Activated naive CD4-positive, alpha-beta T cell treated with anti-CD3 and anti-CD28 coated beads for 36 hours (primary cell): ENCODE measurements at regions of chr6 and their contacts with region 1.

Region 1: DNA sequence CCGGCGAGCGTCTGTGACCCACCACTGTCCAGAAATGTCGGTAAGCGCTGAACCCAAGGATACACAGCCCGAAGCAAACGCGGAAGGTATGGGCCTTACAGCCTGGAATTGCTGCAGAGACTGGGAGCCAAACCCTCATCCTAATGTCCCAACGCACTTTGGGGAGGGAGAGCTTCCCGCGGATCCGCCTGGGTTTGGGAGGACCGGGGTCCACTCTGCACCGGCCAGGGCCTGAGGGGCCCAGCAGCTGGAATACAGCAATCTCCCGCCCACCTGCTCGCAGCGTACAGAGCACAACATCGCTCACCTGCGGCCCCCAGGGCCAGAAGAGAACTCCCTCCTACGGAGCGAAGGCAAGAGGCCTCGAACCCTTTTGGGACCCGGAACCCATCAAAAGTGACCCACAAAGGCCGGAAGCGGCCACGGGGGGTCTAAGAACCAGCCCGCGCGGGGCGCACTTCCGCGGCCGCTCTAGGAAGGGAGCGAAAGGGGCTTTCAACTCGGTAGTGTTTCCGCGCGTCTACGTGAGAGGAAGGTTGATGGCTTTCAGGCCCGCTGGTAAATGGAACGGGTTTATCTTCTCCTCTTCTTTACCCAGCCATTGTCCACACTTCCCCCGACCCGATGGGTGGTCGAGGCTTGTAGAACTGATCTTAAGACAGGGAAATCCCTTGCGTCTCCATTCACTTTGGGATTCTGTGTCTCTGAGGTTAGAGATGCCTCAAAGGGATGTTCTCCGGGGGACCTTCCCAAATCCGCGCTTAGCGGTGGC is at the start of gene ZSCAN12:
- DNase-seq: peak; percentile 90
- H3K4me3 Mint-ChIP-seq: peak within 1 kb of the TSS; percentile 91
- H3K27ac Mint-ChIP-seq: peak within 1 kb of the TSS; percentile 91
- H3K4me1 Mint-ChIP-seq: peaks cover 39% of the 10 kb centered on the region
- H3K27me3 Mint-ChIP-seq: peaks cover 20% of the 10 kb centered on the region
- total RNA-seq, gene ZSCAN12: 4.4 to 4.7 TPM

Region 2: GRCh38 chr6:28281288-28282064 is 118.1 kb before region 1 on chr6 and contains the start of gene PGBD1:
- CTCF ChIA-PET with region 1: no interaction called
- intact Hi-C with region 1: loop called (anchors 5 kb)
- DNase-seq: peak; percentile 60
- H3K4me3 Mint-ChIP-seq: peak within 1 kb of the TSS; percentile 78
- H3K27ac Mint-ChIP-seq: no peak within 1 kb of the TSS
- H3K4me1 Mint-ChIP-seq: peaks cover 10% of the 10 kb centered on the region
- H3K27me3 Mint-ChIP-seq: peaks cover 26% of the 10 kb centered on the region
- total RNA-seq, gene PGBD1: 0.64 to 0.69 TPM

Region 3: GRCh38 chr6:28443112-28443773 is 43.7 kb after region 1 on chr6 and contains the start of gene ZSCAN23:
- CTCF ChIA-PET with region 1: interaction called, 6 read pairs
- intact Hi-C with region 1: loop called (anchors 1 kb)
- DNase-seq: peak; percentile 93
- H3K4me3 Mint-ChIP-seq: peak within 1 kb of the TSS; percentile 98
- H3K27ac Mint-ChIP-seq: peak within 1 kb of the TSS; percentile 87
- H3K4me1 Mint-ChIP-seq: peaks cover 31% of the 10 kb centered on the region
- H3K27me3 Mint-ChIP-seq: peaks cover 24% of the 10 kb centered on the region
- total RNA-seq, gene ZSCAN23: 1.7 to 2.0 TPM

Region 4: DNA sequence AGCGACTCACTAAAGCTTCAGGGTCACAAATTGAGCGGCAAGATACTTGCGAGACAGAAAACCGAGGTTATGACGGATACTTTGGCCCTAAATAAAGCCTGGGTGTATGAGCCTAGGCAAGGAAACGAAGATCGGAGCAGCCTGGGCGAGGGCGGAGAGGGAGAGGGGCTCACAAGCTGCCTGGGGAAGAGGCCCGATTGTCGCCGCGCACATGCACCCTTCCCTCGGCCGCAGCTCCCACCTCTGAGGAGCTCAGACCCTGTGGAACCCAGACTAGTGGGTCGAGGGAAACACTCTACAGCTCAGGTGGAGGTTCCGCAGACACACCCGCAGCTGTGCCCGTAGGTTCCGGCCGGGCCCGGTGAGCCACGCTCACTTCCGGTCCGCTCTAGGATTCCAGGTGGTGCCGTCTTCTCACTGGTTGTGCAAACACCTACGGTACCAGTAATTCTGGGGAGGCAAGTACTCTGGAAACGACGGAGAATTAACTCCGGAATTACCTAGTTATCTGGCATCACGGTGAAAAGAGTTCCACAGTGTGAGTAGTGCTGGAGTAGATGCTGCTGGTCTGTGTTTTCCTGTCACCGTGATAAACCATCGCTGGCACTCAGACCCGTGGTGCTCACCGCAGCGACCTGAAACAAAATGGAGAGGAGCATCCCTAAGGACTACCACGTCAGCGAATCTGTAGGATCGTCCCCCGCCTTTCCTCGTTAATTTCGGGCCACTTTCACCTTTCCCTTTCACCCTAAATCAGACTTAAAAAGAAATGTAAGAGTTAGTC is 187.6 kb after region 1 on chr6:
- CTCF ChIA-PET with region 1: interaction called, 4 read pairs
- intact Hi-C with region 1: loop called (anchors 10 kb)
- DNase-seq: peak; percentile 80
- H3K4me3 Mint-ChIP-seq: peak overlapping the region; percentile 85
- H3K27ac Mint-ChIP-seq: no peak overlapping the region
- H3K4me1 Mint-ChIP-seq: peaks cover 21% of the 10 kb centered on the region
- H3K27me3 Mint-ChIP-seq: peaks cover 61% of the 10 kb centered on the region